CD4-positive, alpha-beta memory T cell (primary cell): ENCODE measurements at regions of chr20 and their contacts with region 1.

Region 1: DNA sequence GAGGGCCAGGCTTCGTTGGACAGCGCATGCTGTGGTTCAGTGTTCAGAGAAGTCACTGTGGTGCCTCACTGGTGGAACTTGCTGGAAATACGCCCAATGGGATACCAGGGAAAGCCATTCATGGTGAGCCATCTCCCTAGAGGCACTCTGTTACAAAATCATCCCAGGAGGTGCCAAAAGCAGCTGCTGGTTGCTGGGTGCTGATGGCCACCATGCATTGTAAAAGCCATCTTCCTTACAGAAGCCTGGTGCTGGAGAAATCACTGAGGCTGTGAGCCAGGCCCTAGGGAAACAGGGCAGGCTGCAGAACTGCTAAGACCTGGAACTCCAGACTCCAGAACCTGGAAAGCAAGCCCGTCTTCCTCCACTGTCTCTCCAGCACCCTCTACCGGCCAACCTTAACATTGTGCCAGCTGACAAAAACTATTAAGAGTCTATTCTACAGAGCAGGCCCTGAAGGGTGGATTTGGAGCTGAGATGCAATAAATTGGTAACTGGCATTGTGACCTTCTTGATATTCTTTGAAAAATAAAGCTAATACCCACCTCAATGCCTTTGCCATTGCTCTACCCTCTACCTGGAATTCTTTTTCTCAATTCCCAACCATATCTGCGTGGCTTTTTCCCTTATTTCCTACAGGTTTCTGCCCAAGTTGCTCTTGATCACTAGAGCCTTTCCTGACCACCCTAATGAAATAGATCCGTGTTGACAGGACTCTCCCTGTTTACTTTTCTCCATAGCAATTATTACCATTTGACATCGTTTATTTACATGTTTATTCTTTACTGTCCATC is 18.5 kb downstream of the SNRPB start:
- DNase-seq: peak; percentile 44 to 61 (median 50)
- H3K4me3 ChIP-seq: no peak overlapping the region
- H3K4me3 Mint-ChIP-seq: no peak overlapping the region
- H3K27ac ChIP-seq: no peak overlapping the region
- H3K27ac Mint-ChIP-seq: peak overlapping the region in 1 of 7 donors; percentile 31
- H3K4me1 ChIP-seq: peaks cover 4% of the 10 kb centered on the region
- H3K4me1 Mint-ChIP-seq: peaks cover 7 to 21% (median 14%) of the 10 kb centered on the region in 4 donors
- H3K27me3 ChIP-seq: no peaks in the 10 kb centered on the region
- H3K27me3 Mint-ChIP-seq: no peaks in the 10 kb centered on the region

Region 2: DNA sequence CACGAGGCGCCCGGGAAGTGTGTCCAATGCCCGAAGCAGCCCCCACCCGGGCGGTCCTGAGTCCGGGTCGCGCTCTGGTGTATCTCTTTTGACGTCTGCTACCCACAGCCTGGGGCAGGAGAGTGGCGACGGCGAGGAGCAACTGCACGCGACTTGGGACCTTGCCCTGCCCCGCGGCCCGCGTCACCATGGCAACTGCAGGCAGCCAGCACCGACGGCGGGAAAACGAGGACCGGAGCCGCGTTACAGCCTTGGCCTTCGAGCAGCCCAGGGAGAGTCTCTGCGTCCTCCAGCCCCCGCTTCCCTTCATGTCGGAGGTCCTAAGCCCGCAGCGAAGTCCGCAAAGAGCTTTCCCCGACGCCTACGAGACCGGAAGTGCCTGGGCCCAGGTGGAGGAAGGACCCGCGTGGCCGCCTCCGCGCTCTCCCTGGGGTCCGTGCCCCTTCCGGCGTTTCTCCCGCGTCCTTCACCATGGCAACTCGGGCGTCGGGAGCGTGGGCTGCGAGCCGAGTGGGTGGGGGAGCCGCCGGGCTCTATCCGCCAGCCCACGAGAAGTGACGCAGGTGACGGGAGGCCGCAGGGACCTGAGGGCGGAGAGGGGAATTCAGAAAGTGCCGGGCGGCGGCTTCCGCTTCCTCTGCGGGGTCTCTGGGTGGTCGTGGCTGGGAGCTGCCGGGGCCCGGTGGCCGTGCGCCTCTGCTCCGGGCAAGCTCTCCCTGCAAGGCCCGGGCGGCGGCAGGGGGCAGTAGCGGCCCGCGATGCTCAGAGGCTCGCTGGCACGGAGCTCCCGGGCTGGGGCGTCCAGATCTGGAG is 245.0 kb before region 1 on chr20:
- CTCF ChIA-PET with region 1: interaction called, 18 read pairs
- POLR2A ChIA-PET with region 1: no interaction called
- intact Hi-C with region 1: no loop called
- DNase-seq: peak; percentile 26 to 40 (median 37)
- H3K4me3 ChIP-seq: peak overlapping the region; percentile 11 to 51
- H3K4me3 Mint-ChIP-seq: peak overlapping the region; percentile 69 to 82 (median 74)
- H3K27ac ChIP-seq: no peak overlapping the region
- H3K27ac Mint-ChIP-seq: no peak overlapping the region
- H3K4me1 ChIP-seq: peaks cover 9% of the 10 kb centered on the region
- H3K4me1 Mint-ChIP-seq: peaks cover 0 to 4% (median 2%) of the 10 kb centered on the region in 4 donors
- H3K27me3 ChIP-seq: peaks cover 9% of the 10 kb centered on the region
- H3K27me3 Mint-ChIP-seq: peaks cover 21 to 29% of the 10 kb centered on the region in 2 donors

Region 3: DNA sequence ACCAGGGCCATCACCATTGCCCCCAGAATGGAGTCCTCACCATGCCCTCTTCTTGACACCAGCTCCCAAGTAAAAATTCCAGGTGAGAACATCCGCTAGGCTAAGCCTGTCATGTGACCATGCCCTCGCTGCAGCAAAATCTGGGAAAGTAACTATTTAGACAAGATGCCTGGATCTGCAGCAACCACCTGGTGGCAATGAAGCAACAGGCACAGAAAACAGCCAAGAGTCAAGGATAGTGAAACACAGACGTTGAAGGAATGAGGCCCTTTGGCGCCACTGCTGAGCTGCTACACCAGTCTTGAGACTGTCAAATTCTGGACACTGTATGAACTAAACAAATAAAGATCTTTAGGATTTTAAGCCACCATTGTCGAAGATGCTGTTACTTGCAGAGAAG is 101.5 kb before region 1 on chr20:
- CTCF ChIA-PET with region 1: interaction called, 9 read pairs
- POLR2A ChIA-PET with region 1: no interaction called
- intact Hi-C with region 1: loop called (anchors 1 kb)
- DNase-seq: no peak
- H3K4me3 ChIP-seq: no peak overlapping the region
- H3K4me3 Mint-ChIP-seq: no peak overlapping the region
- H3K27ac ChIP-seq: no peak overlapping the region
- H3K27ac Mint-ChIP-seq: no peak overlapping the region
- H3K4me1 ChIP-seq: peaks cover 5% of the 10 kb centered on the region
- H3K4me1 Mint-ChIP-seq: peaks cover 0 to 14% (median 3%) of the 10 kb centered on the region in 4 donors
- H3K27me3 ChIP-seq: no peaks in the 10 kb centered on the region
- H3K27me3 Mint-ChIP-seq: peaks cover 13 to 16% of the 10 kb centered on the region in 2 donors